ENCODE measurements at regions of chr1 and their contacts with region 1.

Region 1: GRCh38 chr1:45443580-45444461 is 47.1 kb downstream of the TESK2 start:
- DNase-seq: no peak
- ATAC-seq: no peak
- H3K4me3 ChIP-seq: no peak overlapping the region
- H3K4me3 Mint-ChIP-seq: no peak overlapping the region
- H3K27ac ChIP-seq: no peak overlapping the region
- H3K27ac Mint-ChIP-seq: no peak overlapping the region
- H3K4me1 ChIP-seq: no peaks in the 10 kb centered on the region
- H3K4me1 Mint-ChIP-seq: no peaks in the 10 kb centered on the region
- H3K27me3 ChIP-seq: no peaks in the 10 kb centered on the region
- H3K27me3 Mint-ChIP-seq: no peaks in the 10 kb centered on the region

Region 2: GRCh38 chr1:43912607-43913006 is 1531.2 kb before region 1 on chr1:
- CTCF ChIA-PET with region 1: no interaction called
- POLR2A ChIA-PET with region 1: no interaction called
- DNase-seq: no peak
- ATAC-seq: no peak
- H3K4me3 ChIP-seq: no peak overlapping the region
- H3K4me3 Mint-ChIP-seq: no peak overlapping the region
- H3K27ac ChIP-seq: no peak overlapping the region
- H3K27ac Mint-ChIP-seq: no peak overlapping the region
- H3K4me1 ChIP-seq: no peaks in the 10 kb centered on the region
- H3K4me1 Mint-ChIP-seq: no peaks in the 10 kb centered on the region
- H3K27me3 ChIP-seq: no peaks in the 10 kb centered on the region
- H3K27me3 Mint-ChIP-seq: no peaks in the 10 kb centered on the region

Region 3: GRCh38 chr1:45322486-45323040 is 121.3 kb before region 1 on chr1:
- CTCF ChIA-PET with region 1: no interaction called
- POLR2A ChIA-PET with region 1: no interaction called
- DNase-seq: no peak
- ATAC-seq: no peak
- H3K4me3 ChIP-seq: no peak overlapping the region
- H3K4me3 Mint-ChIP-seq: no peak overlapping the region
- H3K27ac ChIP-seq: no peak overlapping the region
- H3K27ac Mint-ChIP-seq: no peak overlapping the region
- H3K4me1 ChIP-seq: peaks cover 0 to 17% of the 10 kb centered on the region in 2 experiments
- H3K4me1 Mint-ChIP-seq: peaks cover 0 to 4% (median 2%) of the 10 kb centered on the region in 3 donors
- H3K27me3 ChIP-seq: peaks cover 0 to 3% of the 10 kb centered on the region in 2 experiments
- H3K27me3 Mint-ChIP-seq: no peaks in the 10 kb centered on the region

Region 4: DNA sequence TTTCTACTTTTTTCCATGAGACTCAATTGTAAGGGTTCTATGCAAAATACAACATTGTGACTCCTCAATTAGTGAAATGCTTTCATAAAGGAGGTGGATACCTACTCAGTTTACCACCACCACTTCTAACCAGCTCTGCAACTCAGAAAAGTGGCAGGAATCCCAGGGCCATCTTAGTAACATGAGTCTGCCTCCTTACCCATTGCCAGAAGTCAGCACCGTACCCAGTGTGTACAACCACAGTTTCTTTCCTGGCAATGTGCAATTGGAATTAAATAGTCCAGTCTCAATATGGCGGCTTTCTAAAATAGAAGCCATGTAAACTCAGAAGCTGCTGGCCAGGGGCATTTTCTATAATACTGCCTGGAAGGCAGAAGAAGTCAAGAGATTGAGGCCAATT is 15.1 kb after region 1 on chr1:
- CTCF ChIA-PET with region 1: no interaction called
- POLR2A ChIA-PET with region 1: interaction called in 1 of 2 experiments, 12 read pairs
- DNase-seq: no peak
- ATAC-seq: no peak
- H3K4me3 ChIP-seq: no peak overlapping the region
- H3K4me3 Mint-ChIP-seq: no peak overlapping the region
- H3K27ac ChIP-seq: no peak overlapping the region
- H3K27ac Mint-ChIP-seq: no peak overlapping the region
- H3K4me1 ChIP-seq: no peaks in the 10 kb centered on the region
- H3K4me1 Mint-ChIP-seq: no peaks in the 10 kb centered on the region
- H3K27me3 ChIP-seq: no peaks in the 10 kb centered on the region
- H3K27me3 Mint-ChIP-seq: no peaks in the 10 kb centered on the region